ENCODE measurements at regions of chr22 and their contacts with region 1.

Region 1: DNA sequence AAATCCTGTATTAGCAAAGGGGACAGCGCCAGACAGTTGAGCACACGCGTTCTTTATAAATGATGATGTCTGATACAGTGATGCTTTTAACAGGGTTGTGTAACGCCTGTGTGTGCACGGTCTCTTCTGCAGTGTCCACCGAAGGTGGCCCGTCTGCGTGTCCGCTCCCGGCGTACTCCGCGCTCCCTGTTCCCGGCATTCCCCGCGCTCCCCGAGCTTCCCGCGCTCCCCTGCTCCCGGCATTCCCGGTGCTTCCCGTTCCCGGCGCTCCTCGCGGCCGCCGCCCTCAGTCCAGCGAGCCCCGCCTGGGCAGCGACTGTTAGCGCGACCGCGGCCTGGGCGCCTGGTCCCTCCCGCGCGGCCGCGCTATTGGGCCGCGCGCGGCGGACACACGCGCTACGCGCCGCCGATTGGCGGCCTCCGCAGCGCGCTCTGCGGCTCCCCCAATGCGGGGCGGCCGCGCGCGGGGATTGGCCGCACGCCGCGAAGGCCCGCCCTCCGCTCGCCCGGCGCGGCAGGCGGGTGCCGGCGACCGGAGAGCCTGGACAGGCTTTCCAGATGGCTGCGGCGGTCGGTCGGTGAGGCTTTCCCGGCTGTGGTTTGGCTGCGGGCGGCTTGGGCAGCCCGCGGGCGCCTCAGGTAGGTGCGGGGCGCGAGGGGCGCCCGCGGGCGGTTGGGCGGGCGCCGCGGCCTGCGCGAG is at the start of gene DGCR8:
- DNase-seq: peak; percentile 86
- ATAC-seq: peak; percentile 93
- H3K4me3 ChIP-seq: peak within 1 kb of the TSS; percentile 85 to 99
- H3K27ac ChIP-seq: peak within 1 kb of the TSS; percentile 93
- H3K4me1 ChIP-seq: peaks cover 13 to 35% of the 10 kb centered on the region in 2 experiments
- H3K27me3 ChIP-seq: no peaks in the 10 kb centered on the region
- CTCF ChIP-seq: no peak
- POLR2A ChIP-seq: peak; percentile 94
- RAD21 ChIP-seq: no peak
- total RNA-seq, gene DGCR8: 43.8 TPM

Region 2: DNA sequence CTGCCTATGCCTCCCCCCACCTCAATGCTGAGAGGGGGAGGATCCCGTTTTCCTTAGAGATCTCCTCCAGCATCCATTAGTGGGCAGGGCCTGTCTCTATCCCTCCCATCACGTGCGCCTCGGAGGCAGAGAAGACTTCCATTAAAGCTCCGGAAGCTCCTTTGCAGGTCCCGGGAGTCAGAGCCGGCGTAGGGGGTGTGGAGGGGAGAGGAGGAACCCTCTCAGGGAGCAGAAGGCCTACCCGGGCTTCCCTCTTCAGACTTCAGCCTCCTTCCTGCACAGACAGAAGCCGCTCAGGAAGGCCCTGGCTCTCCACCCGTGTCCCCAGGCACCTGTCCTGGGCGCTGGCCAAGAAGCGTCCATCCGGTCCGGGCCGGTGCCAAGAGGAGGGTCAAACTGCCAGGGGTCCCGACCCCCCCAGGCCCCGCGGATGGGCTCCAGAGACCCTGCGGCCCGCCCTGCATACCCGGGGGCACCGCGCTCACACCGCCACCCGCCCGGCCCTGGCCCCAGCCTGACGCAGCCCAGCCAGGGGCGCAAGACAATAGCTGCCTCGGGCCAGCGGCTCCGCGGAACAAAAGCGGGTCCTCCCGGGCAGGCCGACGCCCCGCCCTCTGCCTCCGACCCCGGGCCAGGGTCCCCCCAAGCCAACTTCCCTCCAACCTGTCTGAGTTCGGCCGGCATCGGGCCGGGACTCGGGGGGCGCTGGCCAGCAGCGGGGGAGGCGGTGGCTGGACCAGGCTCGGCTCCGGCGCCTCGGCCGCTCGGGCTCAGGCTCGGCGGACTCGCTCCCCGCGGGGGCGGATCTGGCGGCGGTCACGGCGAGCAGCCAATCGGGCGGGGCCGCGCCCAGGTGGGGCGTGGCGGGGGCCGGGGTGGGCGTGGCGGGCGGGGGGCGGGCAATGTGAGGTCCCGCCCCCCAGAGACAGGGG is 93.2 kb before region 1 on chr22:
- CTCF ChIA-PET with region 1: no interaction called
- POLR2A ChIA-PET with region 1: no interaction called
- RAD21 ChIA-PET with region 1: no interaction called
- intact Hi-C with region 1: loop called (anchors 10 kb)
- DNase-seq: no peak
- ATAC-seq: peak; percentile 79
- H3K4me3 ChIP-seq: peak overlapping the region; percentile 68 to 85
- H3K27ac ChIP-seq: peak overlapping the region; percentile 68
- H3K4me1 ChIP-seq: peaks cover 37 to 45% of the 10 kb centered on the region in 2 experiments
- H3K27me3 ChIP-seq: no peaks in the 10 kb centered on the region
- CTCF ChIP-seq: no peak
- POLR2A ChIP-seq: peak; percentile 31
- RAD21 ChIP-seq: no peak

Region 3: DNA sequence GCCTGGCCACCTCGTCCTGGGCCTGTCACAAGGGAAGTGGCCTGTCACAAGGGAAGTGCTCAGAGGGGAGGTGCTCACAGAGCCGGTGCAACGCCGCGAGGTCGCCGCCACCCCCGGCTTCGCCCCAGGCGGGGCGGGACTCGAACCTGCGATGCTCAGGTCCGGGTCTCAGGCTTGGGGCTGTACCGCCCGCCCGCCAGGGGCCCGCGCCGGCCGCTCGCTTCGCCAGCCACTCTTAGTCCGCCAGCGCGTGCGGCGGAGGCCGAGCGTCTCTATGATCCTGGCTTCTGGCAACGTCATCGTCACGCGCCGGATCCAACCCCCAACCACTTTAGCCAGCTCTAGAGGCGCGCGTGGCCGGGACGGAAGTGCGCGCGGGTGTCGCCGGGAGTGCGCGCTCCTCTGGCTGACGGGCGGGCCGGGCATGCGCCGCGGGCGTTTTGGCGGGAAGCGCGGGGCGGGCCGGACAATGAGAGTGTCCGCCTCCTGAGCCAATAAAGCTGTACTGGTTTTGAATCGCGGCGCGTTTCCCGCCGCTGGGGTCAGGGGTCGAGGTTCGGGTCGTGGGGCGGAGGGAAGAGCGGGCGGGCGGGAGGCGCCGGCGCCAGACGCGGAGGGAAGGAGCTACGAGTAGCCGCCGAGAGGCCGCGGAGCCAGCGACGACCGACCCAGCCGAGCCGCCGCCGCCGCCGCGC is 37.2 kb after region 1 on chr22 and contains the start of gene TRMT2A:
- CTCF ChIA-PET with region 1: no interaction called
- POLR2A ChIA-PET with region 1: no interaction called
- RAD21 ChIA-PET with region 1: no interaction called
- intact Hi-C with region 1: loop called (anchors 1 kb)
- DNase-seq: peak; percentile 97
- ATAC-seq: peak; percentile 81
- H3K4me3 ChIP-seq: peak within 1 kb of the TSS; percentile 96 to 97
- H3K27ac ChIP-seq: peak within 1 kb of the TSS; percentile 79
- H3K4me1 ChIP-seq: peaks cover 12 to 27% of the 10 kb centered on the region in 2 experiments
- H3K27me3 ChIP-seq: no peaks in the 10 kb centered on the region
- CTCF ChIP-seq: no peak
- POLR2A ChIP-seq: peak; percentile 38
- RAD21 ChIP-seq: no peak
- total RNA-seq, gene TRMT2A: 67.3 TPM